ENCODE measurements at regions of chrX and their contacts with region 1.

Region 1: DNA sequence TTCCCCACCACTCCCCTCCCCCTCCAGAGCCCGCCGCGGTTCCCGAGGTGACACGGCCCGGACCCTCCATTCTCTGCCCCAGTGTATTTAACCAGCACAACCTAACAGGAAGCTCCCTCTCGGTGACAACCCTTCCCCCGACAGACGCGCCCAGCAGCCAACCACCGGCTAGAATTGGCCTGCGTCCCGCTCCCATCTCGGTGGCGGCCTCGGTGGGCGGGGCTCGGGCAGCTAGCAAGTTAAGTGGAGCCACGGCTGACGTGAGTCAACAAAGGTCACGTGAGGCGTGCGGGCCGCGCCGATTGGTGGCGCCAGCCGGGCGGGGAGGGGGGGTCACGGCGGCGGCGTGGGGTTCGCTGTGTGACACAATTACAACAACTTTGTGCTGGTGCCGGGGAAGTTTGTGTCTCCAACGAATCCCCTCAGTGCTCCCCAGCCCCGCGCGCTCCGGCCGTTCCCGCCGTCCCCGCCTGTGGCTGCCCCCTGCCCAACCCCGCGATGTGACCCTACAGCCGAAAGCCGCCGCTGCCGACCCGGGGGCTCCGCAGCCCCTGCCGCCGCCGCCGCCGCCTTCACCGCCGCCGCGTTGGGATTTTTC is at the start of gene KDM6A:
- DNase-seq: peak; percentile 83
- ATAC-seq: peak; percentile 89
- H3K4me3 ChIP-seq: peak within 1 kb of the TSS; percentile 72 to 74
- H3K27ac ChIP-seq: peak within 1 kb of the TSS; percentile 84
- H3K4me1 ChIP-seq: peaks cover 2 to 14% of the 10 kb centered on the region in 2 experiments; a peak in 2 of 4 replicates
- H3K27me3 ChIP-seq: no peaks in the 10 kb centered on the region
- CTCF ChIP-seq: no peak
- POLR2A ChIP-seq: peak; percentile 30
- RAD21 ChIP-seq: no peak
- total RNA-seq, gene KDM6A: 21.0 TPM

Region 2: DNA sequence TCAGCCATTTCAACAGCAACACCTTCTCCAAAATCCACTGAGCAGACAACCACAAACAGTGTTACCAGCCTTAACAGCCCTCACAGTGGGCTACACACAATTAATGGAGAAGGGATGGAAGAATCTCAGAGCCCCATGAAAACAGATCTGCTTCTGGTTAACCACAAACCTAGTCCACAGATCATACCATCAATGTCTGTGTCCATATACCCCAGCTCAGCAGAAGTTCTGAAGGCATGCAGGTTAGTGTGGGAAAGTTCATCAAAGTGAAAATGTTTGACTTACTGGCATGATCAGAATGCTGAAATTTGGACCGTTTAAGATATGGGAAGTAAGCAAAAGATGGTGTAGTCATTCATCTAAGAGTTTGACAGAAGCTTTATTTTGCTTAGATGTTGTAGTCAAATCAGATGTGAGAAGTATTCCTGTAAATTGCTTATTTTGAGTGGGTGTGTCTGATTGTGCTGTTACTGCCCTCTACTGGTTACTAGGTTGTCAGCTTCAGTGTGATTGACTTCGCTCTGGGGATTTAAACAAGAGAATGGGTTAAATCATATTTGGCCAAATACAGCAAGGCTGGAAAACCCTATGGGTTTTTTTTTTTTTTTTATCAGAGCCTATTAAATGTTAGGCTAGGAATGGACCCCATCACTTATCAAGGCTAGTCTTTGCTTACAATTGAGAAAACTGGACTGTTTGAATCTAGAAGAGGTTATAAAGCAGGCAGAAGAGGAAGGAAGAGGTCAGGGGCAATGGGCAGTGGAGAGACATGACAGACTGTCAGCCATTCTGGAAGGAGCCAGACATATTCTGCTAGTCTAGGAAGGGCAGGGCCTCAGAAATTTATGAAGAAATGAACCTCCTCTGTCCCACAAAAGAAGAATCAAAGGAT is 197.4 kb after region 1 on chrX:
- CTCF ChIA-PET with region 1: interaction called, 3 read pairs
- POLR2A ChIA-PET with region 1: interaction called, 3 read pairs
- RAD21 ChIA-PET with region 1: no interaction called
- intact Hi-C with region 1: loop called (anchors 2 kb)
- DNase-seq: peak; percentile 24
- ATAC-seq: peak; percentile 67; the same call in 1 of the 2 replicates
- H3K4me3 ChIP-seq: no peak overlapping the region
- H3K27ac ChIP-seq: no peak overlapping the region
- H3K4me1 ChIP-seq: no peaks in the 10 kb centered on the region
- H3K27me3 ChIP-seq: no peaks in the 10 kb centered on the region
- CTCF ChIP-seq: peak; percentile 26 to 58 (median 55); a peak in 5 of 6 replicates
- POLR2A ChIP-seq: no peak
- RAD21 ChIP-seq: peak; percentile 66